ENCODE measurements at regions of chr1 and their contacts with region 1.

Region 1: DNA sequence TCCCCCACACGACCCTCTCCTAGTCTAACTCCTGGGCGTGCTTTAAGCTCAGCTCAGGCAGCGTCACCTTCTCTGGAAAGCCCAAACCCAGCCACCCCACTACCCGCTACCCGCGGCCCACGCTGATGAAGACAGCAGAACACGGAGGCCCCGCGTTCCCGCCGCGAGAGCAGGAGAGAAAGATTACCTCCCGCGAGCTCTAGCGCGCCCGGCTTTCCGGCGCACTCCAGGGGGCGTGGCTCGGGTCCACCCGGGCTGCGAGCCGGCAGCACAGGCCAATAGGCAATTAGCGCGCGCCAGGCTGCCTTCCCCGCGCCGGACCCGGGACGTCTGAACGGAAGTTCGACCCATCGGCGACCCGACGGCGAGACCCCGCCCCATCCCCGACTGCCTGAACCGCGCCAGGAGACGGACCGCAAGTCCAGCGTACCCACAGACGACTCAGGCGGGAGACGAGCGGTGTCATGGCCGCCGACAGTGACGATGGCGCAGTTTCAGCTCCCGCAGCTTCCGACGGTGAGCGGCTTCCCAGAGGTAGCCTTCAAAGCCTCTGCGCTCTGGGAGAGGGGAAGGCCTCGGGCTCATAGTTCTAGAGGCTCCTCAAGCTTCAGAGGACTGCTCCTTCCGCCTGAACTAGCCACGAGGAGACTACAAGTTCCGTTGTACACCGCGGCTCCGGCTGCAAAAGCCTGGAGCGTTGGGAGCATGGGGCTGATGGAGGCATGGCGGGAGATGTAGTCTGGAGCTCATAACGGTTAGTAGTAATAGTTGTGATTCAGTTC is at the starts of genes MUTYH and TOE1:
- DNase-seq: peak; percentile 95
- H3K4me3 Mint-ChIP-seq: peak within 1 kb of the TSS; percentile 95
- H3K27ac Mint-ChIP-seq: peak within 1 kb of the TSS; percentile 99
- H3K4me1 Mint-ChIP-seq: peaks cover 37% of the 10 kb centered on the region
- H3K27me3 Mint-ChIP-seq: no peaks in the 10 kb centered on the region
- total RNA-seq, gene MUTYH: 50.1 and 50.9 TPM in 2 replicates
- total RNA-seq, gene TOE1: 26.3 and 29.3 TPM in 2 replicates

Region 2: GRCh38 chr1:45221716-45222115 is 118.3 kb before region 1 on chr1:
- intact Hi-C with region 1: no loop called
- DNase-seq: no peak
- H3K4me3 Mint-ChIP-seq: no peak overlapping the region
- H3K27ac Mint-ChIP-seq: no peak overlapping the region
- H3K4me1 Mint-ChIP-seq: no peaks in the 10 kb centered on the region
- H3K27me3 Mint-ChIP-seq: peaks cover 2% of the 10 kb centered on the region

Region 3: DNA sequence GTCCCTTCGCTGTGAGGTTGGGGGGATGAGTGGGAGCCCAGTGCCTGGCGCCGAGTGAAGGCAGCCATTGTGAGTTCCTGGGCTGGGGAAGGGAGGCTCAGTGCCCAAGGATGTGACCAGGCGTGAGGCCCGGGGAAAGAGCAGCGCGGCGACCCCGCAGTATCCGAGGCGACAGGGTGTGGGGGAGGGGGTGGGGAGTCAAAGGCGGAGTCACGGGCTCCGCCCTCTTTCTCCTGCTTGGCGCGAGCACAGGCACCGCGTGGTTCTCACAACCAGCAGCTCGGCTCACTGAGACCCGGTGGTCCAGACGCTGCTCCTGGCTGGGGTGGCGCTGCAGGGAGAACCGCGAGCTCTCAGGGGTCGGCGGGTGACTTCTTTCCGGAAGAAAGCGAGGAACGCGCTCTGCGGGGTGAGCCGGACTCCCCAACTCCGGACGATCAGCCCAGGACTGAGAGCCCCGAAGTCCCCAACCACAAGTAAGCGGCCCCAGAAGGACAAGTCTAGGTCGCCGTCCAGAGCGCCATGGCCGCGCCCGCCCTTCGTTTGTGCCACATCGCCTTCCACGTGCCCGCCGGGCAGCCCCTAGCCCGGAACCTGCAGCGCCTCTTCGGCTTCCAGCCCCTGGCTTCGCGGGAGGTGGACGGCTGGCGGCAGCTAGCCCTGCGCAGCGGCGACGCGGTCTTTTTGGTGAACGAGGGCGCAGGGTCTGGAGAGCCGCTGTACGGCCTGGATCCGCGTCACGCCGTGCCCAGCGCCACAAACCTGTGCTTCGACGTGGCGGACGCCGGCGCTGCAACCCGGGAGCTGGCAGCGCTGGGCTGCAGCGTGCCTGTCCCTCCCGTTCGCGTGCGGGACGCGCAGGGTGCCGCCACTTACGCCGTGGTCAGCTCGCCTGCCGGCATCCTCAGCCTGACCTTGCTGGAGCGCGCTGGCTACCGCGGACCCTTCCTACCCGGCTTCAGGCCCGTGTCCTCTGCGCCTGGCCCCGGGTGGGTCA is 13.1 kb before region 1 on chr1 and contains the start of gene HPDL:
- intact Hi-C with region 1: loop called (anchors 1 kb)
- DNase-seq: peak; percentile 44
- H3K4me3 Mint-ChIP-seq: peak within 1 kb of the TSS; percentile 80
- H3K27ac Mint-ChIP-seq: peak within 1 kb of the TSS; percentile 65
- H3K4me1 Mint-ChIP-seq: peaks cover 16% of the 10 kb centered on the region
- H3K27me3 Mint-ChIP-seq: no peaks in the 10 kb centered on the region
- total RNA-seq, gene HPDL: 26.8 and 29.0 TPM in 2 replicates

Region 4: DNA sequence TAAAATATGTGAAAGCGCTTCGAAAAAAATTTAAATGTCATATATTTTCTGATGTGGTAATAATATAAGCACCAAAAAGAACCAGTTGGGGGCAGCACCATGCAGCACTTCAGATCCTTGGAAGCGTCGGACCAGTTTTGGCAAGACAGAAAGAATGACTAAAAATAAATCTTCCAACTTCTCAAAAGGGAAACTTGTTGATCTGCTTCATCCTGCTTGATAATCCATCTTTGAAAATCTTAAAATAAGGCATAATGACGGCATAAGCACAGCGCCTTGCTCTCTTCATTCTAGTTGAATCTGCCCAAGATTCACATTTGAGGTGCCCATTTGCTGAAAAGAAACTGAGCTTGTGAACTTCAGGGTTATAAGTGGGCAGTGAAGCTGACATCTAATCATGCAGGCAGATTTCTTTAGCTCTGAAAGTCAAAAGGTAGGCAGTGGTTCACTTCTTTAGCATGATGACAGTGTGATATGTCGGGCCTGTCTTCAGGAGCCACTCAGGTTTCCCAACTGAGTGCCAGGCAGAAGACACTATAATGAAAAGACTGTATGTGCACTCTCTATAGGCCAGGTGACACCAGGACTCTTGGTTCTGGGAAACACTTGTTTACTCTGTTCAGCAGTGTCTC is 20.0 kb after region 1 on chr1:
- intact Hi-C with region 1: no loop called
- DNase-seq: no peak
- H3K4me3 Mint-ChIP-seq: no peak overlapping the region
- H3K27ac Mint-ChIP-seq: no peak overlapping the region
- H3K4me1 Mint-ChIP-seq: peaks cover 11% of the 10 kb centered on the region
- H3K27me3 Mint-ChIP-seq: no peaks in the 10 kb centered on the region

Region 5: DNA sequence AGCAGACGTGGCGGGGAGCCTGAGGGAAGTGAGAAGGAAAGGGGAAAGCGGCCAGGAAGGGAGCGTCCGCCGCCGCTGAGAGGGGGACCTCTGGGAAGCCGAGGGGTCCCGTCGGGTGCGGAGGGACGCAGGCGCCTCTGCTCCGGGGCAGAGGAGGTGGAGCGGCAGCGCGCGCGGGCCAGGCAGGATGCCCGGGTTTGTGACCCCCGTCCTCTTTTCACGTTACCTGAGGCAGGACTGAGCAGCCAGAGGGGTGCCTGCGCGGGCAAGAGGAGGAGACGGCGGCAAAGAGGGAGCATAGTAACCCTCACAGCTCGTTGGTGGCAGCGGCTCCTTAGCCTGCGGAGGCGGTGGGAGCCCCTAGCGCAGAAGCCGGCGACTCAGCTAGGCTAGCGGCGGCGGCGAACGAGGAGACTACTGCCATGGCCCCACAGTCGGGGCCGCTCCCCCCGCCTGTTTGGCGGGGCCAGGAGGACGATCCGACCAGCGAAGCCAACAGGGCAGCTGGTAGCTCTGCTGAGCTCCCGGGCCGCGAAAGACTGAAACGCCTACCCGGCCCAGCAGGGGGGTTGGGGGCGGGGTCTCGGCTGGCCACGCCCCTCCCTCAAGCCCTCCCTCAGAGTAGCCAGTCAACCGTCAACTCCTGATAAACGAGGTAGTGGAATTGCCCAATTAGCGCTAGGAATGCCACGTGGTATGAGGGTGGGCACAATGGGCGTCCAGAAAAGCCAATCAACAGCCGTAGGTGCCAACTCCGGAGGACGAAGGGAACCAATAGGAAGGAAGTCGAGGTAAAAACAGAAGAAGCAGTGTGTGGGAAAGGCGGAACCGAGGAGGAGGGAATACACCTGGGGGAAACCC is 150.9 kb after region 1 on chr1 and contains the start of gene TESK2:
- intact Hi-C with region 1: loop called (anchors 1 kb)
- DNase-seq: peak; percentile 97
- H3K4me3 Mint-ChIP-seq: no peak within 1 kb of the TSS
- H3K27ac Mint-ChIP-seq: no peak within 1 kb of the TSS
- H3K4me1 Mint-ChIP-seq: peaks cover 9% of the 10 kb centered on the region
- H3K27me3 Mint-ChIP-seq: peaks cover 9% of the 10 kb centered on the region
- total RNA-seq, gene TESK2: 2.3 and 2.9 TPM in 2 replicates

Region 6: DNA sequence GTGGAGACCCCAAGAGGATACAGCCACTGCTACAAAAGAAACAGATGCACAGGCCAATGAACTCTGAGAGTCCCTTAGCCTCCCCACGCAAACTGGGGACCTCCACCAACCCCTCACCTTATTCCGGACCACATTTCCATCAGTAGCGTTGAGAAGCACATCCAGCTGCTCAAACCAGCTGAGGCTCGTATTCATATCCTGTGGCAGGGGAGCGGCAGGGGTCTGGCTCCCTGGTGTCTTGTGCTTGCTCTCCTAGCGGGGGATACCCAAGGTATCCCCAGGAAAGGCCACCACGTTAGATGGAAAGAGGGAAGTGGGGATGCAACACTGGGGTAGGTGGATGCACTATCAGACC is 159.4 kb after region 1 on chr1:
- intact Hi-C with region 1: loop called (anchors 1 kb)
- DNase-seq: no peak
- H3K4me3 Mint-ChIP-seq: peak overlapping the region; percentile 87
- H3K27ac Mint-ChIP-seq: peak overlapping the region; percentile 86
- H3K4me1 Mint-ChIP-seq: peaks cover 33% of the 10 kb centered on the region
- H3K27me3 Mint-ChIP-seq: no peaks in the 10 kb centered on the region